Activated naive CD4-positive, alpha-beta T cell treated with anti-CD3 and anti-CD28 coated beads for 36 hours (primary cell): ENCODE measurements at regions of chr14 and their contacts with region 1.

Region 1: GRCh38 chr14:77641534-77642341 is 25.3 kb upstream of the SPTLC2 start:
- DNase-seq: peak; percentile 79
- H3K4me3 Mint-ChIP-seq: peak overlapping the region; percentile 84
- H3K27ac Mint-ChIP-seq: peak overlapping the region; percentile 84
- H3K4me1 Mint-ChIP-seq: peaks cover 17% of the 10 kb centered on the region
- H3K27me3 Mint-ChIP-seq: no peaks in the 10 kb centered on the region

Region 2: GRCh38 chr14:77565289-77565993 is 76.3 kb before region 1 on chr14:
- CTCF ChIA-PET with region 1: no interaction called
- intact Hi-C with region 1: loop called (anchors 2 kb)
- DNase-seq: no peak
- H3K4me3 Mint-ChIP-seq: no peak overlapping the region
- H3K27ac Mint-ChIP-seq: peak overlapping the region; percentile 44
- H3K4me1 Mint-ChIP-seq: peaks cover 10% of the 10 kb centered on the region
- H3K27me3 Mint-ChIP-seq: no peaks in the 10 kb centered on the region

Region 3: DNA sequence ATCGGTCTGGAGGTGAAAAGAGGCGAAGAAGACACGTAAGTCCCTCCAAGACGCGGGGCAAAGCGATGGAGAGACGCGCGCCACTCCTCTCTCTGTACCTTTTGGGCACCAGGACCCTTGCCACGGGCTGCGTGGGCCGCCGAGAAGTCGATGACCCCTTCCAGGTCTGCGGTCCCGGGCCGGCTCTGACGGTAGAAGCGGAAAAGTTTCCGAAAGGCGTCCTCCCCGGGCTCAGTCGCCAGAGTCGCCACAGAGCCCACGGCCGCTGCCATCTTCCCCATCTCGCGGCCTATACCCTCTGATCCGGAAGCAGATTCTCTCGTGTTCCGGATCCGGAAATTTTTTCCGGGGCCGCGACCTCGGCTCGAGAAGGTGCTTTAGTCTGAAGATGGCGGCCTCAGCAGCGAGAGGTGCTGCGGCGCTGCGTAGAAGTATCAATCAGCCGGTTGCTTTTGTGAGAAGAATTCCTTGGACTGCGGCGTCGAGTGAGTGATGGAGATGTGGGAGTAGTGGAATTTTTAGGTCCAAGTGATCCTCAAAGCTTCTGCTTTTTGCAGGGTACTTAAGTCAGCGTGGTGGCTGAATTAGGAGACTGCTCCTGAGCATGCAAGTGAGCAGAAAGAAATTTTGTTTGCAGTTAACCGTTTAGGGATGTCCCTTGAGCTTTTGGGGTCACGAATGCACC is 66.1 kb after region 1 on chr14 and contains the starts of genes ALKBH1 and SLIRP:
- CTCF ChIA-PET with region 1: interaction called, 3 read pairs
- intact Hi-C with region 1: loop called (anchors 1 kb)
- DNase-seq: peak; percentile 92
- H3K4me3 Mint-ChIP-seq: peak within 1 kb of the TSS; percentile 87
- H3K27ac Mint-ChIP-seq: peak within 1 kb of the TSS; percentile 88
- H3K4me1 Mint-ChIP-seq: peaks cover 48% of the 10 kb centered on the region
- H3K27me3 Mint-ChIP-seq: no peaks in the 10 kb centered on the region
- total RNA-seq, gene ALKBH1: 13.5 to 14.5 TPM
- total RNA-seq, gene SLIRP: 134 to 149 TPM